ENCODE measurements at regions of chr1 and their contacts with region 1.

Region 1: GRCh38 chr1:93615582-93616150 is 66.0 kb downstream of the BCAR3 start:
- DNase-seq: no peak
- ATAC-seq: no peak
- H3K4me3 ChIP-seq: no peak overlapping the region
- H3K27ac ChIP-seq: peak overlapping the region in 11 of 12 donors; percentile 39 to 79 (median 68)
- H3K4me1 ChIP-seq: peaks cover 7 to 84% (median 52%) of the 10 kb centered on the region in 12 donors
- H3K27me3 ChIP-seq: no peaks in the 10 kb centered on the region
- CTCF ChIP-seq: no peak
- POLR2A ChIP-seq: no peak

Region 2: GRCh38 chr1:92934395-92935378 is 681.0 kb before region 1 on chr1:
- intact Hi-C with region 1: no loop called
- DNase-seq: peak; percentile 38 to 70 (median 65)
- ATAC-seq: peak; percentile 63 to 84 (median 72)
- H3K4me3 ChIP-seq: peak overlapping the region in 3 of 12 donors; percentile 2 to 4 (median 2)
- H3K27ac ChIP-seq: peak overlapping the region in 10 of 12 donors; percentile 16 to 71 (median 48)
- H3K4me1 ChIP-seq: peaks cover 5 to 37% (median 21%) of the 10 kb centered on the region in 12 donors
- H3K27me3 ChIP-seq: no peaks in the 10 kb centered on the region
- CTCF ChIP-seq: peak in 2 of 12 donors; percentile 5 to 29
- POLR2A ChIP-seq: no peak

Region 3: GRCh38 chr1:93437976-93438605 is 177.6 kb before region 1 on chr1:
- intact Hi-C with region 1: loop called in 1 of 10 experiments (anchors 5 kb)
- DNase-seq: no peak
- ATAC-seq: peak; percentile 42 to 71 (median 46)
- H3K4me3 ChIP-seq: no peak overlapping the region
- H3K27ac ChIP-seq: no peak overlapping the region
- H3K4me1 ChIP-seq: peaks cover 0 to 7% (median 0%) of the 10 kb centered on the region in 12 donors
- H3K27me3 ChIP-seq: no peaks in the 10 kb centered on the region
- CTCF ChIP-seq: peak; percentile 63 to 82 (median 72)
- POLR2A ChIP-seq: no peak

Region 4: DNA sequence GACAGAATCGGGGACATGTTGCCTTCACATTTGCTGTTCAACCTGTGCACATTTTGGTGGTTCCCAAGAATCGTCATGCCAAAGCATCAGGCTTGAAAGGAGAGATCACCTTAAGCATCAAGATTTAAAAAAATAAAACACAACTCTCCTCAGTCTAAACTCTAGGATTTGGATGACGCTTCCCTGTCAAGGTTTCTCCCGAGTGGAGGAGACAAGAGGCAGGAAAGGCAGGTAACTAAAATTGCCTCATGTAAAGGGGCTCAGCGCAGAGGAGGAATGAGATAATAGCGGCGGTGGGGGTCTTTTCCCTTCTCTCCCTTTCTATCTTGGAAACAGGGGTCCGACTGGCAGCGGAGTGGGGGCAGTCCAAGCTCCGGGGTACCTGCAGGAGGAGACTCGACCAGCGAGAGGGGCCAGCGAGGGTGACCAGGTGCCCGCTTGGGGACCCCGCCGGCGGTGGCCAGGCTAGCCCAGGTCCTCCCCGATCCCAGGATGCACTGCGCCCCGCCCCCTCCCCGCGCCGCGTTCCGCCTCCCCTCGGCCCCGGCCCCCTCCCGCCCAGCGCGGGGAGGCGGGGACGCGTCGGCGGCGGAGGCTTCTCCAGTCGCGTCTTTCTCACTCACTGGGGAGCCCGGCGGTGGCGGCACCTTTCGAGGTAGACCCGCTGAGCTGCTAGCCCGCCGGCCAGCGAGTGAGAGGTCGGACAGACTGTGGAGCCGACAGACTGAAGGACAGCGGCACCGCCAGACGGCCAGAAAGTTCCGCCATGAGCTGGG is 168.0 kb before region 1 on chr1 and contains the start of gene FNBP1L:
- intact Hi-C with region 1: loop called in 3 of 10 experiments (anchors 5 kb)
- DNase-seq: peak; percentile 83 to 87 (median 85)
- ATAC-seq: peak; percentile 83 to 96 (median 96)
- H3K4me3 ChIP-seq: peak within 1 kb of the TSS; percentile 70 to 100 (median 95)
- H3K27ac ChIP-seq: peak within 1 kb of the TSS; percentile 54 to 95 (median 89)
- H3K4me1 ChIP-seq: peaks cover 0 to 30% (median 9%) of the 10 kb centered on the region in 12 donors
- H3K27me3 ChIP-seq: no peaks in the 10 kb centered on the region
- CTCF ChIP-seq: no peak
- POLR2A ChIP-seq: peak in 1 of 2 donors; percentile 65
- total RNA-seq, gene FNBP1L: 20.5 to 38.8 (median 25.5) TPM

Region 5: DNA sequence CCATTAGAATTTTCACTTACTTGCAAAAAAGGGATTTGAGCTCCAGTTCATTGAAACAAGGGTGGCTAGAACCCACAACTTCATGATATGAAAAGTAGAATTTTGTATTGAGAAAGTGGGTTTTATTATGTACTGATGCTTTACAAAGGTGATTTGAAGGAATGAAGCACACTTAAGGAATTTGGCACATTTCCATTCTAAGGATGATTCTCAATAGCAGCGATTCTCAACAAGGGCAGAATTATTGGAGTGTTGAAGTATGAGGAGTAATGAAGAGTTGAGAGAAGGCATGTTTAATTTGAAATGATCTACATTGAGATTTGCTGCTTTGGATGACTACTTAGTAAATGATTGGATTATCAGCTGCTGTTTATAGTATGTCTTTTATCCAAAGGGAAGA is 113.1 kb before region 1 on chr1:
- intact Hi-C with region 1: no loop called
- DNase-seq: no peak
- ATAC-seq: no peak
- H3K4me3 ChIP-seq: no peak overlapping the region
- H3K27ac ChIP-seq: no peak overlapping the region
- H3K4me1 ChIP-seq: peaks cover 0 to 22% (median 2%) of the 10 kb centered on the region in 12 donors
- H3K27me3 ChIP-seq: no peaks in the 10 kb centered on the region
- CTCF ChIP-seq: no peak
- POLR2A ChIP-seq: no peak

Region 6: DNA sequence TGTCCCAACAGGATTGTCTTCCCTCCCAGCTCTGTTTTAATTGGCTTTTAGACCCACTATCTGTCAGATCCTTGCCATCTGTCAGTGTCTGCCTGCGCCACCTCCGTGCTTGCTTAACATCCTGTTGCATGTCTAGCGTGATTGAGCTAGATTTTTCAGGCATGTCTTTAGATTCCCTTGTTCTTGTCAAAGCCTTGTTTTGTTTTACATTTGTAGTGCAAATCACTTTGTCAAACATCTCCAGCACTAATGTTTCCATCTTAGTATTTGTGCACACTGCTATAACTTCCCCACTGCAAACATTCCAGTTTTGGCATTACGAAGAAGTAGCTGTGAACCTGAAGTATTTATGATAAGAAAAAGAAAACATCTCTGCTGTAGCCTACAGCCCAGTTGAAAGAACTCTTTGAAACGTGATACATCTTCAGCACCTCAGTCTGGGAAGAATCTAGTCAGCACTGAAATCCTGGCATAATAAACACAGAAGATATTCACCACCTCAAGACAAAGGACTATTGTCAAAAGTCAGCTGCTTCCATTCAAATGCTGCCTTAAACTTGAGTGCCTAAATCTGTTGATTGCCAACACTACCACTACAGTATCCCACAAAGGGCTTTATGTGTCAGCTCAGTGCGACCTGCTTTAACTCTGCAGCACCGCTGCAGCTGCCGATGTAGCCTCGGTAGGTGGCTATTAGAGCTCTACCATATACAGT is 62.8 kb before region 1 on chr1:
- intact Hi-C with region 1: loop called in 4 of 10 experiments (anchors 5 kb)
- DNase-seq: peak in 2 of 5 donors; percentile 51 to 58
- ATAC-seq: peak; percentile 38 to 64 (median 48)
- H3K4me3 ChIP-seq: no peak overlapping the region
- H3K27ac ChIP-seq: peak overlapping the region; percentile 38 to 72 (median 64)
- H3K4me1 ChIP-seq: peaks cover 15 to 45% (median 35%) of the 10 kb centered on the region in 12 donors
- H3K27me3 ChIP-seq: no peaks in the 10 kb centered on the region
- CTCF ChIP-seq: no peak
- POLR2A ChIP-seq: no peak

Region 7: DNA sequence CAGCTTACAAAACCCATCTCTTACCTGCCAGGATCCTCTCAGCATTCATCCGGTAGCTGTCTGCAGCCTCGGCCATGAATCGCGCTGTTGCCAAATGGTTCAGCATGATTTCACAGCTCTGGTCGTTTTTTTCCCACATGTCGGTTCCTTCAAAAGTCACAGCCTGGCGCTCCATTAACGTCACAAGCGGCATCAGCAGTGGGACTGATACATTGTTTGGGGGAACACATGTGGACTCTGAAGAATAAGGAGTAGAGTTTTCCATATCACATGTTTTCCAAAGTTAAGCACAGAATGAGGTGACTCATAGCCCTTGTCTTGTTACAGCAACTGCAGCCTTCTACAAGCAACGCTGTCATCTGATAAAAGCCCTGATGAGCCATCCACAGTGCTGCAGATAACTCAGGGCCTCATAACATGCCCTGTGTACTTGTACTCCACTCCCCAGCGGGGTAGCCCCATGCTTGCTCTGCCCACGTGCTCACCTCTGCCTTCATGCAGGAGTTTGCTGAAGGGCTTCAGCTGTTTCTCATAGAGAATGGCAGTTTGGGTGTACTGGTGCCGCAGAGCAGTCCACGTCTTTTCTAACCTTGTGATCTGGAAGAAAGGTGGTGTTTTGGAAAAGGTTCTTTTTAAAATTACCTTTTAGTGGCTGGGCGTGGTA is 48.3 kb before region 1 on chr1:
- intact Hi-C with region 1: loop called in 1 of 10 experiments (anchors 5 kb)
- DNase-seq: peak in 1 of 5 donors; percentile 74
- ATAC-seq: peak; percentile 62 to 85 (median 76)
- H3K4me3 ChIP-seq: no peak overlapping the region
- H3K27ac ChIP-seq: peak overlapping the region in 10 of 12 donors; percentile 24 to 76 (median 56)
- H3K4me1 ChIP-seq: peaks cover 8 to 28% (median 16%) of the 10 kb centered on the region in 12 donors
- H3K27me3 ChIP-seq: no peaks in the 10 kb centered on the region
- CTCF ChIP-seq: no peak
- POLR2A ChIP-seq: no peak

Region 8: GRCh38 chr1:93585059-93585966 is 30.4 kb before region 1 on chr1:
- intact Hi-C with region 1: loop called in 1 of 10 experiments (anchors 5 kb)
- DNase-seq: peak; percentile 83 to 95 (median 90)
- ATAC-seq: peak; percentile 89 to 94 (median 91)
- H3K4me3 ChIP-seq: peak overlapping the region in 5 of 12 donors; percentile 1 to 35 (median 20)
- H3K27ac ChIP-seq: peak overlapping the region; percentile 64 to 92 (median 82)
- H3K4me1 ChIP-seq: peaks cover 0 to 55% (median 25%) of the 10 kb centered on the region in 12 donors
- H3K27me3 ChIP-seq: no peaks in the 10 kb centered on the region
- CTCF ChIP-seq: no peak
- POLR2A ChIP-seq: no peak

Region 9: GRCh38 chr1:93715529-93716126 is 100.0 kb after region 1 on chr1:
- intact Hi-C with region 1: no loop called
- DNase-seq: peak in 3 of 5 donors; percentile 44 to 70 (median 54)
- ATAC-seq: peak; percentile 74 to 91 (median 88)
- H3K4me3 ChIP-seq: no peak overlapping the region
- H3K27ac ChIP-seq: peak overlapping the region; percentile 28 to 80 (median 58)
- H3K4me1 ChIP-seq: peaks cover 0 to 27% (median 10%) of the 10 kb centered on the region in 12 donors
- H3K27me3 ChIP-seq: no peaks in the 10 kb centered on the region
- CTCF ChIP-seq: no peak
- POLR2A ChIP-seq: no peak

Region 10: DNA sequence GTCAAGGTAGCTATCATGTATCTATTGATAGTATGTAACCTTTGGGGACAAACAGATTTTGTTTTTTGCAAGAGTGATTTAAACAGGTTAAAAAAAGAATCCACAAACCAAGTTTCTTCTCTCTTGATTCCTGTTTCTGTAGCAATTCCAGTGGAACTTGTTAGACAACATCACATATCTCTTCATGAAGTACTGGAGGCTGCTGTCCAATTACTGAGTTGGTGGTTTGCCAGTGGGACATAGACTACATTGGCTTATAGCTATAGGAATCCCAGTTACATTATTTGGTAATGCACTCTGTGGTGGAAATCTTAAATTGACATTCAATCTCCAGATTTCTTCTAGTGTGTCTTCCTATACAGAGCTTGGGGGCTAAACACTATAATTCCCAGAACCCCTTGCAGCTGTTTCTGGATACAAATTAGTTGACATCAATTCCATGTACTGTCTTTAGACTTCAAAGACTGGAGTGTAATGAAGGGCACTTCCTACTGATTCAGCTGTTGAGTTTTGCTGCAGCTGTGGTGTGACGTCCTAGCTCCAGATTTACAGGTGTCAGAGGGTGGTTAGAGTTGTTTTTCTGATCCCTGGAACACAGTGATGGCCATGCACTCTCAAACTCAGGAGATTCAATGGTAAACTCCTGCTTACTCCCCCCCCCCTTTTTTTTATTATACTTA is 322.9 kb after region 1 on chr1:
- intact Hi-C with region 1: no loop called
- DNase-seq: no peak
- ATAC-seq: no peak
- H3K4me3 ChIP-seq: no peak overlapping the region
- H3K27ac ChIP-seq: no peak overlapping the region
- H3K4me1 ChIP-seq: no peaks in the 10 kb centered on the region
- H3K27me3 ChIP-seq: no peaks in the 10 kb centered on the region
- CTCF ChIP-seq: no peak
- POLR2A ChIP-seq: no peak

Measured in heart left ventricle (tissue), 16 donors.